Endothelial cell of umbilical vein (primary cell): ENCODE measurements at regions of chr1 and their contacts with region 1.

Region 1: GRCh38 chr1:224113918-224114786 is at the start of gene FBXO28:
- DNase-seq: peak; percentile 92
- H3K4me3 ChIP-seq: peak within 1 kb of the TSS; percentile 62 to 99 (median 97)
- H3K27ac ChIP-seq: peak within 1 kb of the TSS; percentile 78
- H3K4me1 ChIP-seq: peaks cover 21% of the 10 kb centered on the region
- H3K27me3 ChIP-seq: no peaks in the 10 kb centered on the region
- CTCF ChIP-seq: no peak
- POLR2A ChIP-seq: peak; percentile 95
- total RNA-seq, gene FBXO28: 32.6 and 35.4 TPM in 2 replicates

Region 2: GRCh38 chr1:223811634-223812415 is 302.3 kb before region 1 on chr1:
- CTCF ChIA-PET with region 1: no interaction called
- POLR2A ChIA-PET with region 1: no interaction called
- dilution Hi-C with region 1: no loop called
- intact Hi-C with region 1: loop called (anchors 5 kb)
- DNase-seq: peak; percentile 68
- H3K4me3 ChIP-seq: no peak overlapping the region
- H3K27ac ChIP-seq: no peak overlapping the region
- H3K4me1 ChIP-seq: peaks cover 15% of the 10 kb centered on the region
- H3K27me3 ChIP-seq: no peaks in the 10 kb centered on the region
- CTCF ChIP-seq: peak; percentile 18 to 22
- POLR2A ChIP-seq: no peak

Region 3: DNA sequence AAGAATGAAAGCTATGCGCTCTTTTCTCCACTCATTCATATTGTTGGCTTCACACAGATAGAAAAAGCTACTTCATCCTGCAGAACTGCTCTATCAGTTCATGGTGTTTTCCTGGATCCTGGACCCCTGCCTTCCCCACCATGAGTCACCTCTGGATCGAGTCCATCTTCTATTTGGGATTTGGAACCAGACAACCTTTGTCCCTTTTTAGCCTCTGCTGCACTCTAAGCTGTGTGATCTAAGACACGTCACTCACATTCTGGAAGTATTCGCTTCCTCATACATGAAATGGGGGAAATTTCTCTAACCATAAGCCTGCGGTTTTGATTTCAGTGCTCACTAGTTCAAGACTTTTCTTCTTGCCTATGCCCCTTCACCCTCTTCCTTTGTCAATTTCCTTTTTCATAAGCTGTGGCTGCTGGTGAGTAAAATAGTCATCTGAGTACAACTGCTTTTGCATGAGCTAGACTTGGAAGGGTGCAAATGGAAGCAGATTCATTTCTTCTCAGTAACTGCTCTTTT is 54.8 kb after region 1 on chr1:
- CTCF ChIA-PET with region 1: interaction called, 10 read pairs
- POLR2A ChIA-PET with region 1: no interaction called
- dilution Hi-C with region 1: no loop called
- intact Hi-C with region 1: no loop called
- DNase-seq: peak; percentile 94
- H3K4me3 ChIP-seq: peak overlapping the region in 1 of 3 experiments; percentile 27
- H3K27ac ChIP-seq: peak overlapping the region; percentile 45
- H3K4me1 ChIP-seq: peaks cover 15% of the 10 kb centered on the region
- H3K27me3 ChIP-seq: peaks cover 0 to 3% of the 10 kb centered on the region in 2 experiments
- CTCF ChIP-seq: no peak
- POLR2A ChIP-seq: no peak

Region 4: GRCh38 chr1:224329842-224330753 is 215.9 kb after region 1 on chr1 and contains the start of gene NVL:
- CTCF ChIA-PET with region 1: interaction called, 48 read pairs
- POLR2A ChIA-PET with region 1: no interaction called
- dilution Hi-C with region 1: no loop called
- intact Hi-C with region 1: loop called (anchors 1 kb)
- DNase-seq: peak; percentile 90
- H3K4me3 ChIP-seq: peak within 1 kb of the TSS; percentile 69 to 87 (median 85)
- H3K27ac ChIP-seq: peak within 1 kb of the TSS; percentile 91
- H3K4me1 ChIP-seq: peaks cover 19% of the 10 kb centered on the region
- H3K27me3 ChIP-seq: no peaks in the 10 kb centered on the region
- CTCF ChIP-seq: no peak
- POLR2A ChIP-seq: peak; percentile 85
- total RNA-seq, gene NVL: 30.3 and 35.6 TPM in 2 replicates

Region 5: GRCh38 chr1:224454397-224455066 is 340.4 kb after region 1 on chr1:
- CTCF ChIA-PET with region 1: interaction called, 21 read pairs
- POLR2A ChIA-PET with region 1: no interaction called
- dilution Hi-C with region 1: no loop called
- intact Hi-C with region 1: loop called (anchors 1 kb)
- DNase-seq: no peak
- H3K4me3 ChIP-seq: no peak overlapping the region
- H3K27ac ChIP-seq: no peak overlapping the region
- H3K4me1 ChIP-seq: peaks cover 21% of the 10 kb centered on the region
- H3K27me3 ChIP-seq: no peaks in the 10 kb centered on the region
- CTCF ChIP-seq: no peak
- POLR2A ChIP-seq: no peak

Region 6: DNA sequence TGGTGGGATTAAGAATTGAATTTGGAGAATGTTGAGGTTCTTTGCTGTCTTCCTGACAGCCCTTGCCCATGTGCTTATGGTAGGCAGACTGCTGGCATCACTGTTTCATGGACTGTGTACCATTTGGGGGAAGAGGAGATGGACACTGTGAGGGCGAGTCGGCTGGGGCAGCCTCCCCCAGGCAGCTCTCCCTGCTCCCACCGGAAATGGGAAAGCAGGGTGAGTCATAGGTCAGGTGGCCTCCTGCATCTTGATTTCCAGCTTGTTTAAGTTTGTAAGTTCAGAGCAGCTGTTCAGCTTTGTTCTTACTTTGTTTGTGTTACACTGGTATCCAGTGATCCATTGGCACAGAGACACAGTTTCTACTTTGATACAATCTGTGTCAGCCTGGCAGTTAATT is 414.7 kb after region 1 on chr1:
- CTCF ChIA-PET with region 1: no interaction called
- POLR2A ChIA-PET with region 1: no interaction called
- dilution Hi-C with region 1: no loop called
- intact Hi-C with region 1: no loop called
- DNase-seq: peak; percentile 84
- H3K4me3 ChIP-seq: no peak overlapping the region
- H3K27ac ChIP-seq: no peak overlapping the region
- H3K4me1 ChIP-seq: peaks cover 15% of the 10 kb centered on the region
- H3K27me3 ChIP-seq: no peaks in the 10 kb centered on the region
- CTCF ChIP-seq: no peak
- POLR2A ChIP-seq: no peak